ENCODE measurements at regions of chr13 and their contacts with region 1.

Region 1: GRCh38 chr13:19984430-19985218 is 26.1 kb downstream of the ZMYM2 start:
- DNase-seq: peak; percentile 50
- ATAC-seq: peak; percentile 89
- H3K4me3 ChIP-seq: no peak overlapping the region; the same call in 1 of the 2 replicates
- H3K27ac ChIP-seq: peak overlapping the region; percentile 59
- H3K4me1 ChIP-seq: peaks cover 7% of the 10 kb centered on the region
- H3K27me3 ChIP-seq: no peaks in the 10 kb centered on the region
- CTCF ChIP-seq: peak; percentile 45 to 60 (median 47); a peak in 5 of 6 replicates
- EP300 ChIP-seq: peak in 1 of 2 experiments; percentile 36; a peak in 1 of 4 replicates
- POLR2A ChIP-seq: no peak
- RAD21 ChIP-seq: peak; percentile 63

Region 2: GRCh38 chr13:19967621-19968020 is 17.0 kb before region 1 on chr13:
- CTCF ChIA-PET with region 1: interaction called, 12 read pairs
- POLR2A ChIA-PET with region 1: no interaction called
- RAD21 ChIA-PET with region 1: no interaction called
- SMC1A ChIA-PET with region 1: interaction called, 5 read pairs
- in situ Hi-C with region 1: no loop called
- intact Hi-C with region 1: no loop called
- DNase-seq: no peak
- ATAC-seq: peak; percentile 77
- H3K4me3 ChIP-seq: no peak overlapping the region
- H3K27ac ChIP-seq: no peak overlapping the region
- H3K4me1 ChIP-seq: peaks cover 4% of the 10 kb centered on the region; the same call in 1 of the 2 replicates
- H3K27me3 ChIP-seq: no peaks in the 10 kb centered on the region
- CTCF ChIP-seq: no peak
- EP300 ChIP-seq: no peak
- POLR2A ChIP-seq: no peak
- RAD21 ChIP-seq: no peak

Region 3: DNA sequence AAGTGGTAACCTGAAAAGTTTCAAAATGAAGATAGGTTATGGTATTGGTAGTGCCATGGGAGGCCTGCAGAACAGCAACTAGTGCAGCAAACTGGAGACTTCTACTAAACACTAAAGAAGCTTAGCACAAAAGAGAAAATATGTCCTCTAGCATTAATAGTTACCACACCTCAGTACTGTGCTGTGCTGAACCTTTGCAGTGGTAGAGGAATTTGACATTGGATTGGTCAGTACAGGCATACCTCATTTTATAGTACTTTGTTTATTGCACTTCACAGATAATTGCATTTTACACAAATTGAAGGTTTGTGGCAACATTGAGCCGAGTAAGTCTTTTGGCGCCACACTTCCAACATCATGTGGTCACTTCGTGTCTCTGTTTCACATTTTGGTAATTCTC is 14.3 kb after region 1 on chr13:
- CTCF ChIA-PET with region 1: interaction called, 16 read pairs
- POLR2A ChIA-PET with region 1: no interaction called
- RAD21 ChIA-PET with region 1: interaction called, 6 read pairs
- SMC1A ChIA-PET with region 1: interaction called, 7 read pairs
- in situ Hi-C with region 1: no loop called
- intact Hi-C with region 1: no loop called
- DNase-seq: no peak
- ATAC-seq: no peak
- H3K4me3 ChIP-seq: no peak overlapping the region
- H3K27ac ChIP-seq: no peak overlapping the region
- H3K4me1 ChIP-seq: no peaks in the 10 kb centered on the region
- H3K27me3 ChIP-seq: no peaks in the 10 kb centered on the region
- CTCF ChIP-seq: no peak
- EP300 ChIP-seq: no peak
- POLR2A ChIP-seq: no peak
- RAD21 ChIP-seq: no peak

Region 4: GRCh38 chr13:20127577-20128466 is 143.2 kb after region 1 on chr13:
- CTCF ChIA-PET with region 1: interaction called, 10 read pairs
- POLR2A ChIA-PET with region 1: no interaction called
- RAD21 ChIA-PET with region 1: interaction called, 3 read pairs
- SMC1A ChIA-PET with region 1: no interaction called
- in situ Hi-C with region 1: no loop called
- intact Hi-C with region 1: no loop called
- DNase-seq: no peak
- ATAC-seq: peak; percentile 89
- H3K4me3 ChIP-seq: peak overlapping the region; percentile 69
- H3K27ac ChIP-seq: no peak overlapping the region
- H3K4me1 ChIP-seq: no peaks in the 10 kb centered on the region
- H3K27me3 ChIP-seq: peaks cover 2 to 5% of the 10 kb centered on the region in 2 experiments; a peak in 2 of 4 replicates
- CTCF ChIP-seq: peak; percentile 25 to 48 (median 42); a peak in 4 of 6 replicates
- EP300 ChIP-seq: no peak
- POLR2A ChIP-seq: peak; percentile 62; the same call in 1 of the 2 replicates
- RAD21 ChIP-seq: 0 out of 2 replicates have a peak, but pooled peaks have one; percentile 13

Region 5: DNA sequence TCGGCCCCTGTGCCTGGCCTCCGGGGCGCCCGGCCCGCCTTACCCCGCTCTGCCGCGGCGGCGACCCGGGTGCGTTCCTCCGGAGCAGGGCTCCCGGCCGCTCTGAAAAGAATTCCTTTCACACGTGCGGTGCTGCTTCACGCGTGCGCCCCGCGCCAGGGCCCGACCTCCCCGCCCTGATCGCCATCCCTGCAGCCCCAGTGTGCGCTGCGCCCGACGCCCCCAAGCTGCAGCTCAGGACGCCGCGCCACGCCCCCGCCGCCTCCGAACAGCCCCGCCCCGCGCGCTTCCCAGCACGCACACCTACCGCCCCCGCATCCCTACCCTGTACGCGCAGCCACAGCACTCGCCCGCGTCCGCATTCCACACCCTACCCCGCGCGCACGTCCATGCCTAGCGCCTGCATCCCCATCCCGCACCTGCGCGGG is 176.2 kb after region 1 on chr13 and contains the start of gene GJA3:
- CTCF ChIA-PET with region 1: interaction called, 12 read pairs
- POLR2A ChIA-PET with region 1: no interaction called
- RAD21 ChIA-PET with region 1: interaction called, 3 read pairs
- SMC1A ChIA-PET with region 1: interaction called, 11 read pairs
- in situ Hi-C with region 1: no loop called
- intact Hi-C with region 1: loop called (anchors 2 kb)
- DNase-seq: no peak
- ATAC-seq: peak; percentile 68
- H3K4me3 ChIP-seq: peak within 1 kb of the TSS; percentile 71
- H3K27ac ChIP-seq: no peak within 1 kb of the TSS
- H3K4me1 ChIP-seq: no peaks in the 10 kb centered on the region; the same call in 1 of the 2 replicates
- H3K27me3 ChIP-seq: peaks cover 3 to 5% of the 10 kb centered on the region in 2 experiments
- CTCF ChIP-seq: no peak
- EP300 ChIP-seq: no peak
- POLR2A ChIP-seq: no peak
- RAD21 ChIP-seq: no peak
- polyA plus RNA-seq, gene GJA3: not detected

Region 6: DNA sequence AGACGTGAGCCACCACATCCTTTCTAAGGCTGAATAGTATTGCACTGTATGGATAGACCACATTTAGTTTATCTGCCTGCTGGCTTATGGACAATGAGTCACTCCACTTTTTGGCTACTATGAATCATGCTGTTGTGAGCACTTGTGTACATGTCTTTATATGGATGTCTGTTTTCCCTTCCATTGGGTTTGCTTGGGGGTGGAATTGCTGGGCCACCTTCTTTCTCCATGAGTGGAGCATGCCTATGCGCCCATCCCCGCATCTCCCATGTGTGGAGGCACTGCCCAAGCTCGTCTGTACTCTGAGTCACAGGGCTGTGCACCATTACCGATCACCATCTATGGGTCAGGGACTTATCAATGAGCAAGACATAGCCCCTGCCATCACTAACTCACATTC is 374.7 kb after region 1 on chr13:
- CTCF ChIA-PET with region 1: no interaction called
- POLR2A ChIA-PET with region 1: no interaction called
- RAD21 ChIA-PET with region 1: no interaction called
- SMC1A ChIA-PET with region 1: no interaction called
- in situ Hi-C with region 1: no loop called
- intact Hi-C with region 1: no loop called
- DNase-seq: no peak
- ATAC-seq: no peak
- H3K4me3 ChIP-seq: no peak overlapping the region
- H3K27ac ChIP-seq: no peak overlapping the region
- H3K4me1 ChIP-seq: no peaks in the 10 kb centered on the region
- H3K27me3 ChIP-seq: no peaks in the 10 kb centered on the region
- CTCF ChIP-seq: no peak
- EP300 ChIP-seq: no peak
- POLR2A ChIP-seq: no peak
- RAD21 ChIP-seq: no peak

Region 7: DNA sequence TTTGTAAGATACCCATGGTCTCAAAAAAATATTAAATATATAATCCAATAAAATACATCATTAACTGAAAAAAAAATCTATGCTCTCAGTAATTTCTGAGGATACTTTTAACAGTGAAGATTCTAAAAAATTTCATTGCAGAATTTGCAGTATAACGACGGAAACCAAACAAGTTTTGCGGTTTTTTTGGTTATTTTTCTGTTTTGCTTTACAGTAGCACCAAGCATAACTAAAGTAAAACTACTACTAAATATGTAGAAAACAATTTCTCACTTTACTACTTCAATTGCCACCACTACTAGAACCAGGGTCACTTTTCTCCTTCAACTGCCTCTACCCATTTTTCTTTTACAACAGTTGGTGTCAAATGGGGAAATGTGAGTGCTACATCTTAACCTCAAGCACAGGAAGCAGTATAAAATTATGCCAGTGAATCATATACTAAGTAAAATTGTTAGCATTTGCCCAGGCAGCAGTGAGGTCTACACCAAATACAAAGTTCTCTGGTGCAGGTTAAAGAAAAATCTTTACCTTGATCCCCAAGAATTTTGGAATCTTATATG is 1595.2 kb after region 1 on chr13:
- CTCF ChIA-PET with region 1: no interaction called
- POLR2A ChIA-PET with region 1: no interaction called
- RAD21 ChIA-PET with region 1: no interaction called
- SMC1A ChIA-PET with region 1: no interaction called
- in situ Hi-C with region 1: no loop called
- intact Hi-C with region 1: no loop called
- DNase-seq: peak; percentile 19
- ATAC-seq: peak; percentile 83
- H3K4me3 ChIP-seq: no peak overlapping the region
- H3K27ac ChIP-seq: no peak overlapping the region
- H3K4me1 ChIP-seq: peaks cover 4% of the 10 kb centered on the region
- H3K27me3 ChIP-seq: no peaks in the 10 kb centered on the region
- CTCF ChIP-seq: no peak
- EP300 ChIP-seq: no peak
- POLR2A ChIP-seq: no peak
- RAD21 ChIP-seq: no peak

Measured in GM12878 (cell line).